ENCODE measurements at regions of chr16 and their contacts with region 1.

Region 1: DNA sequence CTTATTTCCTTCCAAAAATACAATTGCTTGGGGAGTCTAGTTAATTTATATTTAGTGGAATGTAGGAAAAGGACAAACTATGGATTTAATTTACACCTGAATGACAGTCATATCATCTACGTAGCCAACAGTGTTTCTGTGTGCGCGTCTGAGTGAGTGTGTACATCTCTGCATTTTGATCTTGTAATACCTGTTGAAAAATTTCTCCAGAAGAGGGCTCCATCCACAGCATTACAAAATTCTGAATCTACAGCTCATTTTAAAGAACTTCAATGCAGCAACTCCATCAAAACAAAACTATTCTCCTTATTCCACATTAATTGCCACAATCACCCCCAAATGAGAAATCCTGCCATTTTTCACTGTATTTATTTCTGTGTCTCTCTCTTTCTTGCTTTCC is 3.9 kb downstream of the CDH13 start:
- DNase-seq: no peak
- H3K4me3 Mint-ChIP-seq: no peak overlapping the region
- H3K27ac Mint-ChIP-seq: no peak overlapping the region
- H3K4me1 Mint-ChIP-seq: peaks cover 8% of the 10 kb centered on the region
- H3K27me3 Mint-ChIP-seq: peaks cover 47% of the 10 kb centered on the region

Region 2: GRCh38 chr16:82671741-82672140 is 41.1 kb after region 1 on chr16:
- intact Hi-C with region 1: loop called (anchors 2 kb)
- DNase-seq: peak; percentile 75
- H3K4me3 Mint-ChIP-seq: no peak overlapping the region
- H3K27ac Mint-ChIP-seq: no peak overlapping the region
- H3K4me1 Mint-ChIP-seq: no peaks in the 10 kb centered on the region
- H3K27me3 Mint-ChIP-seq: peaks cover 16% of the 10 kb centered on the region

Region 3: GRCh38 chr16:83215406-83216001 is 584.8 kb after region 1 on chr16:
- intact Hi-C with region 1: loop called (anchors 5 kb)
- DNase-seq: peak; percentile 85
- H3K4me3 Mint-ChIP-seq: no peak overlapping the region
- H3K27ac Mint-ChIP-seq: no peak overlapping the region
- H3K4me1 Mint-ChIP-seq: no peaks in the 10 kb centered on the region
- H3K27me3 Mint-ChIP-seq: no peaks in the 10 kb centered on the region

Measured in activated CD4-positive, alpha-beta T cell treated with anti-CD3 and anti-CD28 coated beads, Interleukin-2, amount 10 ng/mL, durations not matched to agents 24 days and 14 days (primary cell).